H1 (cell line): ENCODE measurements at regions of chr5 and their contacts with region 1.

Region 1: DNA sequence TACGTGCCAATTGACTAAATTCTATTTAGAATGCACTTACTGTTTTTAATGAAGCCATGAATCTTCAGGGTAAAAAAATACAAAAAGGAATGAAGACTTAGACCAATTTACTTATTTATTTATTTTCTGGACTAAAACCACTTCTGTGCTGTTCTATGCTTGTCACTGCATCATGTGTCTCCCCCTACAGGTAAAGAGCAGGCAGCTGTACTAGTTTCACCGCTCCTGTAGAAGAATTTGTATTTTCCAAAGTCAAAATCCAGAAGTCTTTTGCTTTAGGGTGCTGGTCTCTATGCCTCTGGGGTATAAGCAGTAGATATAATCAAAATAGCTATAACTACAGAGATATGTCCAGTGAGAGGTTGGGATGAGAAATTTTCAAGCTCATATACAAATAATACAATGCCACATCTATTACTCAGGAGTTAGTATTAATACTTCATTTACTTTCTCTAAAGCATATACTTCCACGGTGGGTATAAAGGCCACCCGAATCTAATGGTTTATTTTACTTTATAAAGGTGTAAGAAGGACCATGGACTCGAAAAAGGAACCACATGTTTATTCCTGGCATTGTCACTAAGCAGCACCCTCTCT is 591.5 kb downstream of the RAB3C start:
- DNase-seq: no peak
- H3K4me3 ChIP-seq: no peak overlapping the region
- H3K27ac ChIP-seq: no peak overlapping the region
- H3K4me1 ChIP-seq: no peaks in the 10 kb centered on the region
- H3K27me3 ChIP-seq: no peaks in the 10 kb centered on the region
- CTCF ChIP-seq: peak in 2 of 3 experiments; percentile 75 to 76; a peak in 3 of 4 replicates
- EP300 ChIP-seq: no peak
- POLR2A ChIP-seq: no peak
- RAD21 ChIP-seq: peak; percentile 76 to 82

Region 2: DNA sequence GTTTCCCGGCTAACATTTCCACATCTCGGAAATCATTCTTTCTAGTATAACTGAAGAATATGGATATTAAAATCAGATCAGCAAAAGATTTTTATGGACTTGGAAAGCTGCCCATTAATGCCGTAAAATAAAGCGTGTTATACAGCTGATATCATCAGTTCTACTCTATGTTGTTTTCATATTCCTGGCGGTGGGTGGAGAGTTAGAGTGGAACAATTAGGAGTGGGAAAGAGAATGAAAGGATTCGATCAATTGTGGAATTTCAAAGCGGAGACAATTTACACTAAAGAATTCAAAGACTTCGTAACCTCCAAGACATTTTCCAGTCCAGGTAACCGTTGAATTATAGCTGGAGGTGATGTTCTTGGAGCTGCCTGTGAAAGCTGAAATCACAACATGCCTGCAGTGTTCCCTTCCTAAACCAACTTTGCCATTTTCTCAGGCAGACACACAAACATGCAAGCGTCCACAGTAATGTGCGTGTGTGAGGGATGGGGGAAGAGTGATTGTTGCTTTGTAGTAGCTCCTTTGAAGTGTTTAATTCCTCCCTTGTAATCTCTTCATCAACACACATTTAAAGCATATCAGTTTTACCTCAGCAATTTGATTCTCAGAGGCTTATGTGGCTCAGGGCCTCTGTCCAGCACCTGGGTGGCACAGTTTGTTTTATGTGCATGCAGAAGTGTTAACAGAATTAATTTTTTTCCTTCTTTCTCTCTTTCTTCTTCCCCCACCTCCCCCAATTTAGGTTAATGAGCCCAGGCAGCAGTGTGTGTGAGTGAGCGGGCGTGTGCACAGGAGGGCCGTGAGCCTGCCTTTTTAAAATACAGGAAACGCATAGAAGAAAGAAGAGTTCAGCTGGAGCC is 47.4 kb before region 1 on chr5:
- CTCF ChIA-PET with region 1: interaction called, 11 read pairs
- POLR2A ChIA-PET with region 1: no interaction called
- DNase-seq: peak in 1 of 2 experiments; percentile 46
- H3K4me3 ChIP-seq: peak overlapping the region in 1 of 4 experiments; percentile 45; a peak in 3 of 8 replicates
- H3K27ac ChIP-seq: peak overlapping the region; percentile 76; the same call in 1 of the 2 replicates
- H3K4me1 ChIP-seq: peaks cover 5 to 23% (median 19%) of the 10 kb centered on the region in 4 experiments
- H3K27me3 ChIP-seq: no peaks in the 10 kb centered on the region
- CTCF ChIP-seq: no peak
- EP300 ChIP-seq: no peak
- POLR2A ChIP-seq: peak in 1 of 2 experiments; percentile 64; a peak in 1 of 3 replicates
- RAD21 ChIP-seq: no peak

Region 3: DNA sequence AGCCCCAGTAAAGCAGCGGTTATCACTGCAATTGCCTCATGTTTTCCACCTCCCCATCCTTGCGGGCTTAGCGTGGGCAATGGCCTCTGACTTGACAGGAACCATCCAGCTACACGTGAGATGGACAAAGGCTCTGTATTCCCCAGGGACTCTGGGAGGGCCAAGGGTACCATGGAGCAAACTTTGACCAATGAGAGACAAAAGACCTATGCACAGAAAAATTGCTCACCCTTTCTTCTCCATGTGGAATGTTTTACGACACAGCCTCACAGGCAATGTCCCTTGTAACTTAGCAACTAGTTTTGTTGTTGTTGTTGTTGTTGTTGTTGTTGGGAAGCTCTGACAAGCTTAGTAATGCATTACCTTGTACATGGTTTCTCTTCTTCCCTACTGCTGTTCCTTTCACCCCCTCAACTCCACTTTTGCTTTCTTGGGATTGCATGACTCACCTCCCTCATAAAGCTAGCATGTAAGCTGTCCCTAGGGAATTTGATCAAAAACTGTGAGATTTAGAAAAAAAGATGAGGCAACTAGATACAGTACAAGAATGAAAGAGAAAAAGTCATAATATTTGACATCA is 40.6 kb before region 1 on chr5:
- CTCF ChIA-PET with region 1: interaction called, 14 read pairs
- POLR2A ChIA-PET with region 1: no interaction called
- DNase-seq: no peak
- H3K4me3 ChIP-seq: no peak overlapping the region
- H3K27ac ChIP-seq: no peak overlapping the region
- H3K4me1 ChIP-seq: peaks cover 0 to 4% (median 1%) of the 10 kb centered on the region in 4 experiments; a peak in 2 of 7 replicates
- H3K27me3 ChIP-seq: no peaks in the 10 kb centered on the region
- CTCF ChIP-seq: no peak
- EP300 ChIP-seq: no peak
- POLR2A ChIP-seq: no peak
- RAD21 ChIP-seq: no peak

Region 4: DNA sequence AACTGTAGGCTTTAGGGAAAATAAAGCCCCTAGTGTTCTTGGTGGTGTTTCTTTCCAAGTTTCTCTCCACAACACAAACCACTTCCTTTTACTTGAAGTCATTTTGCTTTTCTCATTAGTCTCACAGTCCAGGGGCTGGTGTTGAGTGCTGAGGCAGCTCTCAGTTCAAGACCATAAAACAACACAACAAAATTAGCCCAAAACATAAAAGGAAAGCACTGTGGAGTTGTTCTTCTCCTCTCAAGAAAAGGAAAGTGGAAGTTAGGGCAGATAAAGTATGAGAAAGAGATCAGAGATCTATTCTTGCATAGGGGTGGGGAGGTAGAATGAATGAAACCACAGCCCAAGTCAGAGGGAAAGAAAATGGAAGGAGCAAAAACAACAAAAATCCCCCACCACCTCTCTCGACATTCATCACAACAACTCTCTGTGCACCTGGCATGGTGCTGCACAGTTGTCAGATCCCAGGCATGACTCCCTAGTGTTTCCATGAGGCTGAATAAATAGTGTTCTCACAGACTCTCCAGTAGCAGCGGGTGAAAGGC is 21.6 kb before region 1 on chr5:
- CTCF ChIA-PET with region 1: interaction called, 10 read pairs
- POLR2A ChIA-PET with region 1: no interaction called
- DNase-seq: no peak
- H3K4me3 ChIP-seq: no peak overlapping the region
- H3K27ac ChIP-seq: no peak overlapping the region
- H3K4me1 ChIP-seq: peaks cover 0 to 3% (median 1%) of the 10 kb centered on the region in 4 experiments; a peak in 1 of 7 replicates
- H3K27me3 ChIP-seq: no peaks in the 10 kb centered on the region
- CTCF ChIP-seq: no peak
- EP300 ChIP-seq: no peak
- POLR2A ChIP-seq: no peak
- RAD21 ChIP-seq: no peak